ENCODE measurements at regions of chr17 and their contacts with region 1.

Region 1: DNA sequence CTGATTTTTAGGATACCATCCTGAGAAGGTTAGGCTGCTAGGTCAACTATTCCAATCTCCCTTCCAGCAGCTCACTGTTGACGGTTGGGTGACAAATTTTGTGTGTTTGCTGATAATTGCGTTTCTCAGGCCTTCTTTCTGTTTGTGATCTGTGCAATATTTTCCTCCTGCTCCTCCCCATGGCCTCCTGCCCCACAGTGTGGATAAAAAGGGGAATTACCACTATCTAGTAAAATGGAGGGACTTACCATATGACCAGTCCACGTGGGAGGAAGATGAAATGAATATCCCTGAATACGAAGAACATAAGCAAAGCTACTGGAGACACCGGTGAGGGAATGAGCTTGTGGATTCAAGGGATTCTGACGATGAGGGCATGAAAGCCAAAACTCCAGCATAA is 9.2 kb downstream of the CHD3 start:
- DNase-seq: peak in 3 of 4 experiments; percentile 23 to 34 (median 33)
- ATAC-seq: peak; percentile 78
- H3K4me3 ChIP-seq: no peak overlapping the region
- H3K27ac ChIP-seq: no peak overlapping the region
- H3K4me1 ChIP-seq: no peaks in the 10 kb centered on the region
- H3K27me3 ChIP-seq: no peaks in the 10 kb centered on the region
- CTCF ChIP-seq: peak; percentile 53 to 73 (median 54); a peak in 5 of 6 replicates
- EP300 ChIP-seq: no peak
- POLR2A ChIP-seq: no peak
- RAD21 ChIP-seq: peak; percentile 84 to 88

Region 2: DNA sequence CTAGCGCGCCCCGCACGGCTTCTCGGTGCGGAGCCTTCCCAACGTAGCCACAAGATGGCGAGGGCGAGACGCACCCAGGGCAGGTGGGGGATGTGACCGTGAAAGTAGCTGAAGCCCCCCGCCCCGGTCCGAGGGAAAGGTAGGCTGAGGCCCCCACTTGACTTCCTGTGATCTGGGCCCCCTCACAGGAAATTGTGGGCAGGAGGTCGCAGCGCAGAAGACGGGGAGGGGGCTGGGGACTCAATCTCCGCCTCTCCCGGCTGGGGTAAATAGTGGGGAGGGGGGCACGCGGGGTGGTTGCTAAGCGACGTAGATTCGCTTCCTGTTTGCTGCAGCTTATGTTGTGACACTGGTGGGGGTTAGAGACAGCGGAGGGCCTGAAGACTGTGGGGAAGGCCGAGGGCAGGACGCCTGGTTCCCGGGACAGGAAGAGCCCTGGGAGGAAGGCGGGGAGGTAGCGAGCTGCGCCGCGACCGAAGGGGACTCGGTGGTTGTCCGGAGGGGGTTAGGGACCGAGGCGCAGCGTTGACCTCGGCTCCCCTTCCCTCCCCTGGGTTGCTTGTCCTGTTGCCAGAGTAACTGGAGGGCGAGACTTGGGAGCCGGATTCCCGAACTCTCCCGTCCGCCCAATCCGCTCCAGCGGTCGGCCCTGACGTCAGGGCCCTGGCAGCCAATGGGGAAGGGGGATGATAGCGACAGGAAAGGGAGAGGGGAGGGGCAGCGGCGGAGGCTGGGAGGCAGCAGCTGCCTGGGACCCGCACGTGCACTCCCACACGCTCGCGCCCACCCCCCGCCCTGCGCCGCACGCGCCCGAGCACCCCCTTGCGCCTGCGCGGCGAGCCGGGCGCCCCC is 62.6 kb before region 1 on chr17:
- CTCF ChIA-PET with region 1: interaction called, 5 read pairs
- POLR2A ChIA-PET with region 1: interaction called, 3 read pairs
- in situ Hi-C with region 1: no loop called
- intact Hi-C with region 1: loop called (anchors 10 kb)
- DNase-seq: peak; percentile 84 to 96 (median 90)
- ATAC-seq: peak; percentile 65
- H3K4me3 ChIP-seq: peak overlapping the region; percentile 65
- H3K27ac ChIP-seq: peak overlapping the region; percentile 85
- H3K4me1 ChIP-seq: peaks cover 34 to 50% of the 10 kb centered on the region in 2 experiments
- H3K27me3 ChIP-seq: peaks cover 8 to 14% of the 10 kb centered on the region in 2 experiments; a peak in 4 of 5 replicates
- CTCF ChIP-seq: peak; percentile 60 to 90 (median 65)
- EP300 ChIP-seq: 0 out of 2 replicates have a peak, but pooled peaks have one; percentile 16
- POLR2A ChIP-seq: 0 out of 2 replicates have a peak, but pooled peaks have one; percentile 1
- RAD21 ChIP-seq: peak; percentile 43 to 77

Region 3: DNA sequence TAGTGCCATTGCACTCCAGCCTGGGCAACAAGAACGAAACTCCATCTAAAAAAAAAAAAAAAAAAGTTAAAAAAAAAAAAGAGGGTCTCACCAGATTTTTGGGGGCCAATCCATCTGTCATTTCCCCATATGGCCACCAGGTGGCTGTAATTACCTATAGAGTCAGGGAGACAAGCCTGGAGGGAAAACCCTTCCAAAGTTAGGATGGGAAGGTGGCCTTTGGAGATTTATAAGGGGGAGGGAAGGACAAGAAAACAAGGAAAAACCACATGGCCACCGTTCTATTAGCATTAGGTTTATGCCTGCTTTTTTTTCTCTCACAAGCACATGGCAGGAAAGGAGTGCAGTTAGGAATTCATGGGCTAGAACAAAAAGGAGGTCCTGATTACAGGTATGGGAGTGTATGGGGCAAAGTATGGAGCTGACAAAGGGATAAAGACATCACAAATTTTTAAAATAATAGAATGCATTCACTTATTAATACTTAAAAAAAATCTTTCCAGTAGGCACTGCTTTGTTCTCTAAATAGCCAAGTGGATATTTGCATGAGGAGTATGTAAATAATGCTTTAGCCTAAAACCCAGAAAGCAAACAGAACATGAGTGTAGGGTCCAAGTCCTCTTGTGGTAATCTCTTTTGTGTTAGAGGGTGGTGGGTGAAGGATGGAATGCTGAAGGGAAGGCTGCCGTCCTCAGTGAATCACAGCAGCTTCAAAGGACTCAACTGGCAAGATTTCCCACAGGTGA is 34.9 kb before region 1 on chr17:
- CTCF ChIA-PET with region 1: interaction called, 38 read pairs
- POLR2A ChIA-PET with region 1: no interaction called
- in situ Hi-C with region 1: no loop called
- intact Hi-C with region 1: loop called (anchors 1 kb)
- DNase-seq: peak; percentile 30 to 48 (median 41)
- ATAC-seq: no peak
- H3K4me3 ChIP-seq: no peak overlapping the region
- H3K27ac ChIP-seq: no peak overlapping the region
- H3K4me1 ChIP-seq: peaks cover 6 to 10% of the 10 kb centered on the region in 2 experiments; a peak in 4 of 5 replicates
- H3K27me3 ChIP-seq: no peaks in the 10 kb centered on the region
- CTCF ChIP-seq: peak; percentile 53 to 69 (median 60)
- EP300 ChIP-seq: no peak
- POLR2A ChIP-seq: no peak
- RAD21 ChIP-seq: peak; percentile 55 to 69

Region 4: GRCh38 chr17:7887482-7888183 is 10.1 kb before region 1 on chr17:
- CTCF ChIA-PET with region 1: no interaction called
- POLR2A ChIA-PET with region 1: no interaction called
- in situ Hi-C with region 1: no loop called
- intact Hi-C with region 1: no loop called
- DNase-seq: peak; percentile 81 to 92 (median 88)
- ATAC-seq: peak; percentile 91
- H3K4me3 ChIP-seq: peak overlapping the region; percentile 66
- H3K27ac ChIP-seq: peak overlapping the region; percentile 97
- H3K4me1 ChIP-seq: peaks cover 21 to 31% of the 10 kb centered on the region in 2 experiments; a peak in 4 of 5 replicates
- H3K27me3 ChIP-seq: no peaks in the 10 kb centered on the region
- CTCF ChIP-seq: no peak
- EP300 ChIP-seq: no peak
- POLR2A ChIP-seq: no peak
- RAD21 ChIP-seq: no peak

Region 5: GRCh38 chr17:7993972-7994589 is 96.3 kb after region 1 on chr17:
- CTCF ChIA-PET with region 1: no interaction called
- POLR2A ChIA-PET with region 1: no interaction called
- in situ Hi-C with region 1: no loop called
- intact Hi-C with region 1: no loop called
- DNase-seq: no peak
- ATAC-seq: no peak
- H3K4me3 ChIP-seq: no peak overlapping the region
- H3K27ac ChIP-seq: no peak overlapping the region
- H3K4me1 ChIP-seq: peaks cover 0 to 11% of the 10 kb centered on the region in 2 experiments; a peak in 3 of 5 replicates
- H3K27me3 ChIP-seq: peaks cover 4 to 14% of the 10 kb centered on the region in 2 experiments; a peak in 2 of 5 replicates
- CTCF ChIP-seq: no peak
- EP300 ChIP-seq: no peak
- POLR2A ChIP-seq: no peak
- RAD21 ChIP-seq: no peak

Measured in K562 (cell line).